Activated T-helper 1 cell treated with anti-CD3 and anti-CD28 coated beads, Interleukin-12 subunit alpha, Interleukin-12 subunit beta, Interleukin-2, Interleukin-4 antibody, amounts not matched to agents 30 ng/mL and 10 ng/mL and 1 ng/mL, durations not matched to agents 14 hours and 24 hours and 36 hours (primary cell): ENCODE measurements at regions of chr19 and their contacts with region 1.

Region 1: GRCh38 chr19:54189735-54190502 is 539 bp upstream of the MBOAT7 start:
- DNase-seq: peak; percentile 100
- H3K4me3 Mint-ChIP-seq: peak overlapping the region; percentile 94
- H3K27ac Mint-ChIP-seq: peak overlapping the region; percentile 100
- H3K4me1 Mint-ChIP-seq: peaks cover 31% of the 10 kb centered on the region
- H3K27me3 Mint-ChIP-seq: no peaks in the 10 kb centered on the region

Region 2: GRCh38 chr19:53867225-53868090 is 322.5 kb before region 1 on chr19 and contains the start of gene MYADM:
- intact Hi-C with region 1: loop called (anchors 5 kb)
- DNase-seq: peak; percentile 100
- H3K4me3 Mint-ChIP-seq: peak within 1 kb of the TSS; percentile 94
- H3K27ac Mint-ChIP-seq: peak within 1 kb of the TSS; percentile 96
- H3K4me1 Mint-ChIP-seq: peaks cover 37% of the 10 kb centered on the region
- H3K27me3 Mint-ChIP-seq: peaks cover 3% of the 10 kb centered on the region
- total RNA-seq, gene MYADM: 58.8 and 63.1 TPM in 2 replicates

Region 3: DNA sequence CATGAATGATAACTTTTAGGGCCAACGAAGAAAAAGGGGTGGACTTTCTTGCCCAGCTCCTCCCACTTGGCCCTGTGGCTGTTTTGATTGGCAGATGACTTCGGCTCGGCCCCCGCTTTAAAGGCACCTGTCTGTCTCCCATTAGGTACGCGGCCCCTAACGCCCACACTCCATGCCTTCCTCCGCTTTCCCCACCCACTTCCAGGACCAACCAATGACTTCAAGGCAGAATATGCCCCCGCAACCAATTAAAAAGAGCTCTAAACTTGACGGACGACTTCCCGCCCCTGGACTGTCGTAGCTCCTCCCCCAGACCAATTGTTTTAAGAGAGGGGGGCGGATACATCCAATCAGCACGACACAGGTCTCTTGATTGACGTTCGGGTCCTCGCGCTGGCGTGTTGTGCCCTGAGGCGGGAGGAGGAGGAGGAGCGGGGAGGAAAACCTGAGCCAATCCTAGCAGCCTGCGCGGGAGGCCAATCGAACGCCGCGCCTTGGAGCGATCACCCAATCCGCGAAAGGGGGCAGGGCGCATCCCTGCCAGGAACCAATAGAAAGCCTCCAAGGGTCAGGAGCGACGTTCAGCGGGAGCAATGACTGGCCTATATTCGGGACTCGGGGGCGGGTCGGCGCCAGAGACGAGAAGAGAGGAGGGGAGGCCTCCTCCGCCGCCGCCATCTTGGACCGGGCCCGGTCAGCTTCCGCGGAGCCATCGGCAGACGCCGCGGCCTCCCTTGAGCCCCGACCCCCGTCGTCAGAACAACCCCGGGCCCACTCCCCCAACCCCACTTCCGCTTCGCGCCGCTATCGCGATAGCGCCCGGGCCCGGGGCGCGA is 52.6 kb before region 1 on chr19 and contains the start of gene CNOT3:
- intact Hi-C with region 1: loop called (anchors 1 kb)
- DNase-seq: peak; percentile 99
- H3K4me3 Mint-ChIP-seq: peak within 1 kb of the TSS; percentile 93
- H3K27ac Mint-ChIP-seq: peak within 1 kb of the TSS; percentile 92
- H3K4me1 Mint-ChIP-seq: peaks cover 42% of the 10 kb centered on the region
- H3K27me3 Mint-ChIP-seq: no peaks in the 10 kb centered on the region
- total RNA-seq, gene CNOT3: 70.0 and 73.2 TPM in 2 replicates

Region 4: GRCh38 chr19:54203151-54203611 is 13.3 kb after region 1 on chr19:
- intact Hi-C with region 1: loop called (anchors 1 kb)
- DNase-seq: no peak
- H3K4me3 Mint-ChIP-seq: peak overlapping the region; percentile 95
- H3K27ac Mint-ChIP-seq: peak overlapping the region; percentile 99
- H3K4me1 Mint-ChIP-seq: peaks cover 75% of the 10 kb centered on the region
- H3K27me3 Mint-ChIP-seq: no peaks in the 10 kb centered on the region

Region 5: DNA sequence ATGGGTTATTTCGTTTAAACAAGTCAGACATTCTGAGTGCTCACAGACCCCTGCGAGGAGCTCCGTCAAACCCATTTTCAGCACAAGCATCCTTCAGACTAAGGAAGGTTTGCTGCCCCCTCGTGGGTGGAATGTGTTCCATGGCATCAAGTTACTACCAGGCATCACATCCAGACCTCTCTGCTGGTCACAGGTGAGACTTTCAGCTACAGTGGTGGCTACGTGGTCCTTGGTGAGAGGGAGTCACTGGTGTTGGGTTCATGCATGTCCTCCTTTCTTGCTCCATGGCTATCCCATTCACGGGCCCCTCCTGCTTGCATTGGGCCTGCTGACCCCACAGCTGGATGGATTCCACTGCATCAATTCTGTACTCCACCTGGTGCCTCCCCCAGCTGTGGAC is 76.2 kb after region 1 on chr19:
- intact Hi-C with region 1: no loop called
- DNase-seq: peak; percentile 44
- H3K4me3 Mint-ChIP-seq: no peak overlapping the region
- H3K27ac Mint-ChIP-seq: no peak overlapping the region
- H3K4me1 Mint-ChIP-seq: no peaks in the 10 kb centered on the region
- H3K27me3 Mint-ChIP-seq: peaks cover 16% of the 10 kb centered on the region

Region 6: GRCh38 chr19:54448774-54449700 is 259.1 kb after region 1 on chr19 and contains the start of gene LENG8:
- intact Hi-C with region 1: loop called (anchors 1 kb)
- DNase-seq: peak; percentile 96
- H3K4me3 Mint-ChIP-seq: peak within 1 kb of the TSS; percentile 99
- H3K27ac Mint-ChIP-seq: peak within 1 kb of the TSS; percentile 98
- H3K4me1 Mint-ChIP-seq: peaks cover 36% of the 10 kb centered on the region
- H3K27me3 Mint-ChIP-seq: no peaks in the 10 kb centered on the region
- total RNA-seq, gene LENG8: 192 and 193 TPM in 2 replicates

Region 7: GRCh38 chr19:55624109-55625003 is 1434.4 kb after region 1 on chr19 and contains the start of gene ZNF784:
- intact Hi-C with region 1: loop called (anchors 1 kb)
- DNase-seq: peak; percentile 91
- H3K4me3 Mint-ChIP-seq: peak within 1 kb of the TSS; percentile 90
- H3K27ac Mint-ChIP-seq: peak within 1 kb of the TSS; percentile 98
- H3K4me1 Mint-ChIP-seq: peaks cover 46% of the 10 kb centered on the region
- H3K27me3 Mint-ChIP-seq: peaks cover 20% of the 10 kb centered on the region
- total RNA-seq, gene ZNF784: 3.0 and 4.9 TPM in 2 replicates